ENCODE measurements at regions of chr13 and their contacts with region 1.

Region 1: DNA sequence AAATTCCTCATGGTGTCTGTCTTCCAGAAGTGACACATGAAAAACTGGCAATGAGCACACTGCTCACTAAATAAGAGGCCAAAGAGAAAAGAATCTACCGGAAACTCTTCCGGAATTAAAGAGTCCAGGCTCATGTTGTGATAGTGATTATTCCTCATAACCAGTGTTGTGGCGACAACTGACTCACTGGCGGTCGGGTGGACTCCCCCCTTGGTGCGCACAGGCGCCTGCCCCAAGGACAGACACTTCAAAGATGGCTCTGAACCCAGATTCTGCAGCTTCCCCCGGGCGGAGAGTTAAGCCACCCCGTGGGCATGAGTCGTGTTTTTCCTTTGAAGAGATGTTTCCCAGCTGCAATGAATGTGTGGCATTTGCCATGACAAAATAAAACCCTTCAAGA is 10.3 kb downstream of the IL17D start:
- DNase-seq: peak; percentile 63 to 73 (median 71)
- ATAC-seq: peak; percentile 38 to 65
- H3K4me3 ChIP-seq: no peak overlapping the region
- H3K27ac ChIP-seq: peak overlapping the region; percentile 11
- H3K4me1 ChIP-seq: no peaks in the 10 kb centered on the region
- H3K27me3 ChIP-seq: no peaks in the 10 kb centered on the region

Region 2: GRCh38 chr13:20773194-20774080 is 59.7 kb after region 1 on chr13 and contains the start of gene EEF1AKMT1:
- intact Hi-C with region 1: loop called in 1 of 4 experiments (anchors 5 kb)
- DNase-seq: peak; percentile 96 to 99 (median 99)
- ATAC-seq: peak; percentile 99
- H3K4me3 ChIP-seq: peak within 1 kb of the TSS; percentile 58
- H3K27ac ChIP-seq: peak within 1 kb of the TSS; percentile 70
- H3K4me1 ChIP-seq: peaks cover 4% of the 10 kb centered on the region
- H3K27me3 ChIP-seq: no peaks in the 10 kb centered on the region
- total RNA-seq, gene EEF1AKMT1: 12.4 to 14.8 (median 13.4) TPM

Region 3: GRCh38 chr13:20828539-20829364 is 115.0 kb after region 1 on chr13:
- intact Hi-C with region 1: loop called in 2 of 4 experiments (anchors 5 to 10 kb)
- DNase-seq: no peak
- ATAC-seq: peak; percentile 31 to 39
- H3K4me3 ChIP-seq: peak overlapping the region; percentile 29
- H3K27ac ChIP-seq: no peak overlapping the region
- H3K4me1 ChIP-seq: peaks cover 2% of the 10 kb centered on the region
- H3K27me3 ChIP-seq: no peaks in the 10 kb centered on the region

Measured in right cardiac atrium (tissue), 5 donors.